ENCODE measurements at regions of chr7 and their contacts with region 1.

Region 1: GRCh38 chr7:152336754-152337368 is 98.9 kb downstream of the KMT2C start:
- DNase-seq: peak; percentile 51
- H3K4me3 ChIP-seq: no peak overlapping the region
- H3K27ac ChIP-seq: no peak overlapping the region
- H3K4me1 ChIP-seq: peaks cover 0 to 6% of the 10 kb centered on the region in 2 experiments; a peak in 3 of 4 replicates
- H3K27me3 ChIP-seq: no peaks in the 10 kb centered on the region
- CTCF ChIP-seq: peak; percentile 72
- EP300 ChIP-seq: no peak
- RAD21 ChIP-seq: peak; percentile 59

Region 2: GRCh38 chr7:152313831-152314604 is 22.8 kb before region 1 on chr7:
- CTCF ChIA-PET with region 1: interaction called, 10 read pairs
- POLR2A ChIA-PET with region 1: no interaction called
- DNase-seq: peak; percentile 55
- H3K4me3 ChIP-seq: no peak overlapping the region; a peak in 1 of 4 replicates
- H3K27ac ChIP-seq: peak overlapping the region; percentile 43 to 48
- H3K4me1 ChIP-seq: peaks cover 0 to 15% of the 10 kb centered on the region in 2 experiments; a peak in 2 of 4 replicates
- H3K27me3 ChIP-seq: no peaks in the 10 kb centered on the region
- CTCF ChIP-seq: no peak
- EP300 ChIP-seq: no peak; a peak in 1 of 4 replicates
- RAD21 ChIP-seq: no peak

Region 3: GRCh38 chr7:152354066-152354465 is 17.2 kb after region 1 on chr7:
- CTCF ChIA-PET with region 1: interaction called, 14 read pairs
- POLR2A ChIA-PET with region 1: no interaction called
- DNase-seq: no peak
- H3K4me3 ChIP-seq: no peak overlapping the region
- H3K27ac ChIP-seq: no peak overlapping the region
- H3K4me1 ChIP-seq: peaks cover 0 to 7% of the 10 kb centered on the region in 2 experiments; a peak in 1 of 4 replicates
- H3K27me3 ChIP-seq: no peaks in the 10 kb centered on the region
- CTCF ChIP-seq: no peak
- EP300 ChIP-seq: no peak
- RAD21 ChIP-seq: no peak

Region 4: DNA sequence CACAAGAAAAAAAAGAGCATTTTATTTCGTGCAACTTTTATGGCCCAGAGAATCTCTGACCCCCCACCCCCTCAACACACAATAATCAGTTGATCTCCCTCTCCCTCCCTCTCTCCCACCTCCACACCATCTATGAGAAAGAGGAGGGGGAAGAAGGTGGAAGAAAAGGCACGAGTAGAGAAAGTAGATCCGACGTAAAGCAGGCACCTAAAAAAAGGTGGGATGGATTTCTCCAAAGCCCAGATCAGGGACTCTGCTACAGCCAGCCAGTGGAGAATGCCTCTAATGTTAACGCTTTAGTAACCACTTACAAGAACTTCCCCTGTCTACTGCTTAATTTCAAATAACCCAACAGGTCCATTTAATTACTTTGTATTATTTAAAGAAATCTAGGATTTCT is 74.5 kb after region 1 on chr7:
- CTCF ChIA-PET with region 1: no interaction called
- POLR2A ChIA-PET with region 1: no interaction called
- DNase-seq: peak; percentile 44
- H3K4me3 ChIP-seq: no peak overlapping the region
- H3K27ac ChIP-seq: no peak overlapping the region; a peak in 1 of 4 replicates
- H3K4me1 ChIP-seq: peaks cover 0 to 3% of the 10 kb centered on the region in 2 experiments; a peak in 2 of 4 replicates
- H3K27me3 ChIP-seq: no peaks in the 10 kb centered on the region
- CTCF ChIP-seq: no peak
- EP300 ChIP-seq: no peak
- RAD21 ChIP-seq: peak; percentile 13; the same call in 1 of the 2 replicates

Region 5: DNA sequence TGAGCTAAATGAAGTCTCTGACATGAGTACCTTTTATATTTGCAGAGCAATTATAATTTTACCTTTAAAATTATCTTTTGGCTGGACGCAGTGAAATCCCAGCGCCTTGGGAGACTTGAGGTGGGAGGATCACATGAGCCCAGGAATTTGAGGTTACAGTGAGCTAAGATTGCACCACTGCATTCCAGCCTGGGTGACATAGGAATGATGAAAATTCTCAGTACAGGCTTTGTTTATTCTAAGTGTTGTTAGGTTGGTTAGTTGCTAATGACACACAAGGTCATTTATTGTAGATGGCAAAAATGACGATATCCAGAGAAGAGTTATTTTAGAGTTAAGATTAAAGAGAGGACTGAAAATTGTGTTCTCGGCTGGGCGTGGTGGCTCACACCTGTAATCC is 251.5 kb after region 1 on chr7:
- CTCF ChIA-PET with region 1: no interaction called
- POLR2A ChIA-PET with region 1: no interaction called
- DNase-seq: no peak
- H3K4me3 ChIP-seq: no peak overlapping the region
- H3K27ac ChIP-seq: no peak overlapping the region
- H3K4me1 ChIP-seq: no peaks in the 10 kb centered on the region
- H3K27me3 ChIP-seq: no peaks in the 10 kb centered on the region
- CTCF ChIP-seq: no peak
- EP300 ChIP-seq: no peak
- RAD21 ChIP-seq: no peak

Region 6: GRCh38 chr7:152751449-152752141 is 414.7 kb after region 1 on chr7:
- CTCF ChIA-PET with region 1: no interaction called
- POLR2A ChIA-PET with region 1: no interaction called
- DNase-seq: no peak
- H3K4me3 ChIP-seq: no peak overlapping the region
- H3K27ac ChIP-seq: no peak overlapping the region
- H3K4me1 ChIP-seq: no peaks in the 10 kb centered on the region
- H3K27me3 ChIP-seq: no peaks in the 10 kb centered on the region
- CTCF ChIP-seq: no peak
- EP300 ChIP-seq: no peak
- RAD21 ChIP-seq: no peak